ENCODE measurements at regions of chr2 and their contacts with region 1.

Region 1: GRCh38 chr2:29014811-29015421 is 33.8 kb downstream of the TOGARAM2 start:
- DNase-seq: peak; percentile 86
- H3K4me3 Mint-ChIP-seq: peak overlapping the region; percentile 89
- H3K27ac Mint-ChIP-seq: peak overlapping the region; percentile 98
- H3K4me1 Mint-ChIP-seq: peaks cover 81% of the 10 kb centered on the region
- H3K27me3 Mint-ChIP-seq: no peaks in the 10 kb centered on the region

Region 2: GRCh38 chr2:28870146-28870891 is 144.6 kb before region 1 on chr2 and contains the start of gene TRMT61B:
- CTCF ChIA-PET with region 1: interaction called, 5 read pairs
- POLR2A ChIA-PET with region 1: interaction called, 19 read pairs
- DNase-seq: peak; percentile 98
- H3K4me3 Mint-ChIP-seq: peak within 1 kb of the TSS; percentile 96
- H3K27ac Mint-ChIP-seq: peak within 1 kb of the TSS; percentile 95
- H3K4me1 Mint-ChIP-seq: peaks cover 32% of the 10 kb centered on the region
- H3K27me3 Mint-ChIP-seq: peaks cover 2% of the 10 kb centered on the region
- total RNA-seq, gene TRMT61B: 13.1 to 14.1 TPM

Region 3: GRCh38 chr2:28958689-28959088 is 56.2 kb before region 1 on chr2:
- CTCF ChIA-PET with region 1: interaction called, 15 read pairs
- POLR2A ChIA-PET with region 1: interaction called, 8 read pairs
- DNase-seq: peak; percentile 50
- H3K4me3 Mint-ChIP-seq: no peak overlapping the region
- H3K27ac Mint-ChIP-seq: no peak overlapping the region
- H3K4me1 Mint-ChIP-seq: peaks cover 8% of the 10 kb centered on the region
- H3K27me3 Mint-ChIP-seq: peaks cover 3% of the 10 kb centered on the region

Region 4: DNA sequence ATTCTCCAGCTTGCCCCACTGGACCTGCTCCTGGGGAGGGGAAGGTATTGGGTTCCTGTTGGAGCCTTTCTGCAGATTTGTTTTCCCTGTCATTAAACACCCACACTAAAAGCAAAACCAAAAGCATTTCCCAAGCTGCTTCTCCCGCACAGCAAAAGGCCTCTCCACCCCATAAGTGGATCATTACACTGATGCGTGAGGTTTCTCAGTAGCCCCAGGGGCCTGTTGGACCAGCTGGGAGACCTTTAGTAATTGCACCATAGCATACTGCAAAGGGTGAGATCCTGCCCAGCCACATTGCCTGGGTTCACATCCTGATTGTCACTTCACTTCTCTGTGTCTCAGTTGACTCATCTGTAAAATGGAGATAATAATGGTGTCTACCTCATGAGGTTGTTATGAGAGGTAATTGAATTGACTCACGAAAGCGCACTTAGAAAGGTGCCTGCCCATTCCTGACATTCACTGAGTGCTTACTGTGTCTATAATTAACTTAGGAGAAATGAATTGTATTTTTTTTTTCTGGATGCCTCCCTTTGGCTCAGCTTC is 10.0 kb after region 1 on chr2:
- CTCF ChIA-PET with region 1: interaction called, 7 read pairs
- POLR2A ChIA-PET with region 1: interaction called, 15 read pairs
- DNase-seq: no peak
- H3K4me3 Mint-ChIP-seq: no peak overlapping the region
- H3K27ac Mint-ChIP-seq: no peak overlapping the region
- H3K4me1 Mint-ChIP-seq: peaks cover 3% of the 10 kb centered on the region
- H3K27me3 Mint-ChIP-seq: no peaks in the 10 kb centered on the region

Region 5: DNA sequence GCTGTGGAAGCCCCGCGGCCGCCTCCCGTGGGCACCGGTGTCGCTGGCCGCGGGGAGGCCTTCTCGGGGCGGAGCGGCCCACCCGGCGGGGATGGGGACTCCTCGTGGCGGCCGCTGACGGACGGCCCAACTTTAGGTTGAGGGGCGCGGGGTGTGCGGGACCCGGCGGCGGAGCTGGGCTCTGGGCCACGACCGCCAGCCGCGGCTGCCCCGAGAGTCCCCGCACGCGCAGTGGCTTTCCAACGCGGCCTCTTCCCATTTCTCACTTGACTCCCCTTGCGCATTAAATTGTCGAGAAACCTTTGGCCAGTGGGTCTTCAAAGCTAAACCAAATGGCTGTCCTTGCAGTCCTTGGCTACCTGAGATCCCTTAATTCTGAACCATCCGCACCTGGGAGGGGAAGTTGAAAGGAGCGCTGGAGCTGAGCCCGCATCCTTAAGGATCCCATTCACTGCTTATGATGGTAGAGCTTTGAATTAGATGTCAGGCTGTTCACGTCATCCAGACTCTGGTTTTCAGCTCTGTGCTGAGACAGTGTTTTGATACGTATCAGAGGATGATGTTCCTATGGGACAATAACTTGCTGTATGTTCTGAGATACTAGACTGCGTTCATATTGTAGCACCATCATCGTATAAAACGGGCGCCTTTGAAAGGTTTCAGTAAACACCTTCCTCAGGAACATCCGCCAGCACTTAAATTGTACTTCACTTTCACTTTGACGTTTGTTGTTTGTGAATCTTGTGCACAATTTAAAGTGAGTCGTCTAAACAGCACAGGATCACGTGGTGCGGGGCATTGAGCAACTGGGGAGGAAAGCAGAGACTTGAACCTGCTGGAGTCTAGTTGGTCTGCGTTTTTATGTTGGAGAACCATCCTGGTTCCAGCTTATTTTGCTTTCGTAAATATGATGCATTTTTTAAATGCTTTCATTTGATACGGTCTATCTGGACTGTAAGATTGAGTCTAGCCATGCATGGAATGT is 101.2 kb after region 1 on chr2:
- CTCF ChIA-PET with region 1: interaction called, 15 read pairs
- POLR2A ChIA-PET with region 1: interaction called, 66 read pairs
- DNase-seq: peak; percentile 88
- H3K4me3 Mint-ChIP-seq: peak overlapping the region; percentile 84
- H3K27ac Mint-ChIP-seq: peak overlapping the region; percentile 97
- H3K4me1 Mint-ChIP-seq: peaks cover 58% of the 10 kb centered on the region
- H3K27me3 Mint-ChIP-seq: peaks cover 6% of the 10 kb centered on the region

Measured in activated CD4-positive, alpha-beta memory T cell treated with anti-CD3 and anti-CD28 coated beads, Interleukin-2, amount 10 ng/mL, durations not matched to agents 7 days and 5 days (primary cell).